Activated T-helper 1 cell treated with anti-CD3 and anti-CD28 coated beads, Interleukin-12 subunit alpha, Interleukin-12 subunit beta, Interleukin-2, Interleukin-4 antibody, amounts not matched to agents 30 ng/mL and 10 ng/mL and 1 ng/mL, durations not matched to agents 14 hours and 24 hours and 36 hours (primary cell): ENCODE measurements at regions of chr14 and their contacts with region 1.

Region 1: DNA sequence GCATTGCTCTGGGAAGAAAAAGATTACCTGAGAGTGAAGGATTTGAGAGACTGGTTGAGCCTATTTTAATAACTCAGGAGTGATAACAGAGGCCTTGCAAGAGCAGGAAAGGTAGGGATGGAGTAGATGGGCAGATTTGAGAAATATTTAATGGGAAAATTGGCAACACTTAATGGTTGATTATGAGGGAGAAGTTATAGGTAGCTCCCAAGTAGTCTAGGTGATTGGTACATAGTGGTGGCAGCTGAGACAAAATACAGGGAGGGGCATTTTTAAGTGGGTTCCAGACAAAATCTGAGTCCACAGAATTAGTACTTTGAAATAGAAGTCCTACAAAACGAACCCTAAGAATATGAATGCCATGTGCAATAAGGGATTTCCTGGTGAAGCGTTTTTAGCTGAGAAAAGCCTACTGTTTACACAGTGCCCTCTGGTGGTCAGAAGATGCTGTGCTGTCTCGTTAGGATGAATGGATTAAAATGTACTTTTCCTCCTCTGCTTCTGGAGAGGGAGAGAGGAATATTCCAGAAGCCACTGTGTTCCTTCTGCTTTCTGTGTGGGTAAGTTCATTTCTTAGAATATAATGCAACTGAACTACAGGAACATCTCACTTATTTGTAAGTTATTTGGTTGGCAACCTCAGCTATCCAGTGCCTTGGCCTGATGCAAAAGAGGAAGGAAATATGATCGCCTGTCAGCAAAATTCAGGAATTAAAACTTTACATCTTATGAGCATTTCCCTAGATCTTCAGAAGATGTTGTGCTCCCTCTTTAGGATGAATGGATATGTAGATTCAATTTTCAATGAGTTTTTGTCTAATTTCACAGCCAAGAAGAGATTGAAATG is 6.5 kb downstream of the ZBTB1 start:
- DNase-seq: peak; percentile 58
- H3K4me3 Mint-ChIP-seq: peak overlapping the region; percentile 63
- H3K27ac Mint-ChIP-seq: peak overlapping the region; percentile 69
- H3K4me1 Mint-ChIP-seq: peaks cover 74% of the 10 kb centered on the region
- H3K27me3 Mint-ChIP-seq: no peaks in the 10 kb centered on the region

Region 2: GRCh38 chr14:64338616-64339316 is 172.3 kb before region 1 on chr14:
- intact Hi-C with region 1: no loop called
- DNase-seq: peak; percentile 85
- H3K4me3 Mint-ChIP-seq: peak overlapping the region; percentile 81
- H3K27ac Mint-ChIP-seq: peak overlapping the region; percentile 84
- H3K4me1 Mint-ChIP-seq: peaks cover 29% of the 10 kb centered on the region
- H3K27me3 Mint-ChIP-seq: no peaks in the 10 kb centered on the region

Region 3: GRCh38 chr14:64465191-64465822 is 45.7 kb before region 1 on chr14 and contains the start of gene AKAP5:
- intact Hi-C with region 1: loop called (anchors 1 kb)
- DNase-seq: peak; percentile 62
- H3K4me3 Mint-ChIP-seq: peak within 1 kb of the TSS; percentile 88
- H3K27ac Mint-ChIP-seq: peak within 1 kb of the TSS; percentile 88
- H3K4me1 Mint-ChIP-seq: peaks cover 35% of the 10 kb centered on the region
- H3K27me3 Mint-ChIP-seq: peaks cover 6% of the 10 kb centered on the region
- total RNA-seq, gene AKAP5: 1.1 and 1.5 TPM in 2 replicates

Region 4: GRCh38 chr14:64636208-64636979 is 125.3 kb after region 1 on chr14:
- intact Hi-C with region 1: loop called (anchors 1 kb)
- DNase-seq: peak; percentile 43
- H3K4me3 Mint-ChIP-seq: no peak overlapping the region
- H3K27ac Mint-ChIP-seq: no peak overlapping the region
- H3K4me1 Mint-ChIP-seq: peaks cover 9% of the 10 kb centered on the region
- H3K27me3 Mint-ChIP-seq: peaks cover 9% of the 10 kb centered on the region